Transverse colon (tissue), 4 donors: ENCODE measurements at regions of chr1 and their contacts with region 1.

Region 1: GRCh38 chr1:72869873-72870272 is 587.5 kb upstream of the NEGR1 start:
- DNase-seq: no peak
- H3K4me3 ChIP-seq: no peak overlapping the region
- H3K27ac ChIP-seq: no peak overlapping the region
- H3K4me1 ChIP-seq: no peaks in the 10 kb centered on the region
- H3K27me3 ChIP-seq: no peaks in the 10 kb centered on the region
- CTCF ChIP-seq: no peak
- EP300 ChIP-seq: no peak
- POLR2A ChIP-seq: no peak

Region 2: GRCh38 chr1:72804541-72804940 is 65.3 kb before region 1 on chr1:
- in situ Hi-C with region 1: loop called in 1 of 4 experiments (anchors 10 kb)
- intact Hi-C with region 1: no loop called
- DNase-seq: no peak
- H3K4me3 ChIP-seq: no peak overlapping the region
- H3K27ac ChIP-seq: no peak overlapping the region
- H3K4me1 ChIP-seq: no peaks in the 10 kb centered on the region
- H3K27me3 ChIP-seq: no peaks in the 10 kb centered on the region
- CTCF ChIP-seq: no peak
- EP300 ChIP-seq: no peak
- POLR2A ChIP-seq: no peak

Region 3: DNA sequence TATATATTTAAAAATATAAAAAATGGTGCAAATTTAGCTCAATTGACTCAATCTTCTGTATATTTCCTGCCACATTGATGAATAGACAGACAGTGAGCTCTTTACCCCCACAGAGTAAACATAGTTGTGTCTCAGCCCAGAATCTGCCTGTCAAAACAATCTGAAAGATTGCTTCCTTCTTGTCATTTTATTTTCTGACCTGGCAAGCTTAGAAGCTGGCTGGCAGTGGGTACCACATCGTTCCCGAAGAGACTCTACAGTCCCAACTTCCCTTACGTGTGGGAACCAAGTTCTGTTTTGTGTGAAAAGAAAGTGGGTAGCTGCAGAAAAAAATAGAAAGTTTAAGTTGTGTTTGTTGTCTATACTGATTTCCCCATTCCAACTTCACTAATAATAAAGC is 41.8 kb after region 1 on chr1:
- in situ Hi-C with region 1: no loop called
- intact Hi-C with region 1: no loop called
- DNase-seq: no peak
- H3K4me3 ChIP-seq: no peak overlapping the region
- H3K27ac ChIP-seq: no peak overlapping the region
- H3K4me1 ChIP-seq: no peaks in the 10 kb centered on the region
- H3K27me3 ChIP-seq: no peaks in the 10 kb centered on the region
- CTCF ChIP-seq: no peak
- EP300 ChIP-seq: no peak
- POLR2A ChIP-seq: no peak